ENCODE measurements at regions of chr20 and their contacts with region 1.

Region 1: DNA sequence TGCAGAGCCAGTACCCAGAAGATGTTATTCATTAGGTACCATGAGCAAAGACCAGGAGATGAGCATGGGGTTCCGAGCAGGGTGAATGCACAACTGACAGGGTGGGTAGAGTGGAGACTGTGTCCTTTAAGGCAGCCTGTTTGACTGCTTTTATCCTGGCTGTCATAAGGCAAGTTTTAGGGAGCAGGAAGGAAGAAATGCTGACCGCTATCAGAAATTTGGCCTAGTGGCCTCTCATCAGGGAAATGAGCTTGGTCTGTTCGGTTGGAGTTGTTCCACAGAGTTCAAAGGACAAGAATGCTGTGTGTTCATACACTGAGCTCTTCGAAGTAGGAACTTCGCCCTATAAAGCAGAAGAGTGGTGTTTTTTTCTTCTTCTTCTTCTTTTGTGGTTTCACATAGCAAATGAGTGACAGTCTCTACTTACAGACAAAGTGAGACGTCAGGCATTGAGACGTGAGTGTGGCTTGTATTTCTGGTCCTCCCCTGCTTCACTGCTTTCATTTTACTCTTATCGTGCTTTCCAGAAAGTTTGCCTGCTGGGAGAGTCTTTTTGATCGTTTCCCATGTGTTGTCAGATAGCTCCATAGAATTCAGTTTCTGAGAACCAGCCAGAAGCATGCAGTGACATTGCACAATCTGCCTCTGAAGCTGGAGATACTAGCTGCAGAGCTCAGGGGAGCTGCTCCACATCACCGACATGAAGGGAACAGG is at the start of gene CASS4:
- DNase-seq: peak; percentile 80
- H3K4me3 Mint-ChIP-seq: peak within 1 kb of the TSS; percentile 74
- H3K27ac Mint-ChIP-seq: peak within 1 kb of the TSS; percentile 94
- H3K4me1 Mint-ChIP-seq: peaks cover 41% of the 10 kb centered on the region
- H3K27me3 Mint-ChIP-seq: no peaks in the 10 kb centered on the region
- total RNA-seq, gene CASS4: 2.8 and 3.1 TPM in 2 replicates

Region 2: DNA sequence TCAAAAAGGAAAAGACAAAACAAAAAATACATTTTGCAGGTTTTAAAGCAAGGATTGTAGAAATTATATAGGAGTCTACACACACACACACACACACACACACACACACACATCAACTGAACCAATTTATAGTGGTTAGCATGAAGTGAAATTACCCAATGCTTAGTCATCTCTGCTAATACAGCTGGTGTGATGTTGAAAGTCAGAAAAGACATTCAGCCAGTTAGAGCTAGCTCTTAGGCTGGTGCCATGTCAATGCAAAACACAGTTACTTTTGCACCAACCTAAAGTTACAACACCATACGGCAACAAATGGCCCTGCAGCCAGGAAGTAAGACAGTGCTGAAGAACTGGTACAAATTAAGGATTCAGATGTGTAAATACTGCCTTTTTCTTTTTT is 38.0 kb before region 1 on chr20:
- intact Hi-C with region 1: no loop called
- DNase-seq: no peak
- H3K4me3 Mint-ChIP-seq: no peak overlapping the region
- H3K27ac Mint-ChIP-seq: peak overlapping the region; percentile 45
- H3K4me1 Mint-ChIP-seq: peaks cover 40% of the 10 kb centered on the region
- H3K27me3 Mint-ChIP-seq: no peaks in the 10 kb centered on the region

Region 3: GRCh38 chr20:56439771-56440291 is 27.9 kb after region 1 on chr20:
- intact Hi-C with region 1: loop called (anchors 1 kb)
- DNase-seq: peak; percentile 69
- H3K4me3 Mint-ChIP-seq: peak overlapping the region; percentile 76
- H3K27ac Mint-ChIP-seq: peak overlapping the region; percentile 93
- H3K4me1 Mint-ChIP-seq: peaks cover 38% of the 10 kb centered on the region
- H3K27me3 Mint-ChIP-seq: no peaks in the 10 kb centered on the region

Region 4: GRCh38 chr20:56468316-56469082 is 56.6 kb after region 1 on chr20 and contains the start of gene RTF2:
- intact Hi-C with region 1: loop called (anchors 1 kb)
- DNase-seq: peak; percentile 100
- H3K4me3 Mint-ChIP-seq: peak within 1 kb of the TSS; percentile 98
- H3K27ac Mint-ChIP-seq: peak within 1 kb of the TSS; percentile 99
- H3K4me1 Mint-ChIP-seq: peaks cover 37% of the 10 kb centered on the region
- H3K27me3 Mint-ChIP-seq: peaks cover 2% of the 10 kb centered on the region
- total RNA-seq, gene RTF2: 92.3 and 96.5 TPM in 2 replicates

Measured in activated CD4-positive, alpha-beta T cell treated with anti-CD3 and anti-CD28 coated beads, Interleukin-2, amount 10 ng/mL, durations not matched to agents 24 days and 14 days (primary cell).